Activated CD8-positive, alpha-beta memory T cell treated with anti-CD3 and anti-CD28 coated beads, Interleukin-2, amount 10 ng/mL, durations not matched to agents 7 days and 5 days (primary cell): ENCODE measurements at regions of chr10 and their contacts with region 1.

Region 1: DNA sequence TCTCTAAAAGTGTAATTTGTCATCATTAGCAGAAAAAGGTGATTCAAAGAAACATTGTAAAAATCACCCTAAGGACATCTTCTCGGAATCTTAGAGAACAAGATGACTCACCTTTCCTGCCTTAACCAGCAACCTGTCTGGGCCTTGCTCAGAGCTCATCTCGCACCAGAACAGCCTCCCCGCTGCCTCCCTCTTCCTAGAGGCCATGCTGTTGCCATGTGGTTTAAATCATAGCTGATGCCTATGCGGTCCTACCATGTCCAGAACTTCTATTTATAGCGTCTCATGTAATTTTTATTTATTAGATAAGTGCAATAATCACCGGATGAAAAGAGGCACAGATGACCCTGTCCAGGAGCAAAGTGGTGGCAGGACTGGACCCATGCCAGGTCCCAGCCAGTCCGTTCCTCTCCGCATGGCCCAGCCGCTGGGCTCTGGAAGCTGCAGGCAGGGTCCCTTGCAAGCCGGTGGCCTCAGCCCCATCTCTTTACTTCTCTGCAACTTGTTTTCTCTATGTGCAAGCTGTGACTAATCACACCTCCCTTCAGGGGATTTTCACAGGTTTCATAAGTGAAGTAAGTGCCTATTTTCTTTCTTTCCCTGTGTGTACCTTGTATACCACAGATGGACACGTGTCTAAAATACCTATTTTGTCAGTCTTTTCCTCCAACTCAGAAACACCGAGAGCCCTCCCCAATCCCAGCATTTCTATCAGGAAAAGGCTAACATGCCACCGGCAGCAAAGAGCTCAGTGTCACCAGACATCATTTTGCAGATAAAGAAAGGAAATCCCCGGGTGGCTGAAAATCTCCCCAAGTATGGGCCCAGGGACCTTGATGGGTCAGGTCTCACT is 27.1 kb downstream of the KLF6 start:
- DNase-seq: peak; percentile 89
- ATAC-seq: peak; percentile 92
- H3K4me3 Mint-ChIP-seq: peak overlapping the region; percentile 35
- H3K27ac Mint-ChIP-seq: peak overlapping the region; percentile 99
- H3K4me1 Mint-ChIP-seq: peaks cover 77% of the 10 kb centered on the region
- H3K27me3 Mint-ChIP-seq: no peaks in the 10 kb centered on the region

Region 2: GRCh38 chr10:3740157-3740871 is 17.6 kb before region 1 on chr10:
- CTCF ChIA-PET with region 1: interaction called, 23 read pairs
- DNase-seq: no peak
- ATAC-seq: peak; percentile 85
- H3K4me3 Mint-ChIP-seq: peak overlapping the region; percentile 22
- H3K27ac Mint-ChIP-seq: peak overlapping the region; percentile 88
- H3K4me1 Mint-ChIP-seq: peaks cover 41% of the 10 kb centered on the region
- H3K27me3 Mint-ChIP-seq: peaks cover 2% of the 10 kb centered on the region

Region 3: DNA sequence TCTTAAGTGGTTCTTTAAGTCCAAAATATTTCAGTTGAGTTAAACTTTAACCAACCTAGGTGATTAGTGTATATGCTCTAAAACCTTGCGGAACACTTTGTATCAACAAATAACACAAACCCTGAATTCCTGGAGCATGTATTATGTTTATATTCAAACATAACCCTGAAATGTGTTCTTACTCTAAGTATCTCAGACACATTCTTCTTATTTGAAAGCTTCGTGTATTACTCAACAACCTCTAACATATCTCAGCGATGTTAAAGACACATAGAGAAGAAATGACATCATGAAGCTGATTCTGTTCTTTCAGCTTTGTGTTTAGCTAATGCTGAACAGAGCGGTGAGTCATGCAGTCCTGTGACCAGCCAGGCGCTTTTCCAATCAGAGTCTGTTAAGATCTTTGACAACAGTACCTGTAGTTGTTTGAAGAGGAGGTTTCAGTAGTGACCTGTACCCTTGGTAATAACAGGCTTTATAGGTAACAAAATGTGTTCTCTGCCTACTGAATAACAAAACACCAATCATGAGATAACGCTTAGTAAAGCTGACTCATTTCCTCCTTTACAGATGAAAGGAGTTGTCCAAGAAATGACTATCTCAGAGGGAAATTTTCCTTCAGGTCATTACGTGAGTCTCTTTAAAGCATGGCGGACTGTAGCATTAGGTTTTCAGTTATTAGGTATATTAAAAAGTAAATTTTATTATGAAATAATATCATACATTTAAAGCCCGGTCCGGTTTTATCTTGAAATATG is 94.5 kb after region 1 on chr10:
- CTCF ChIA-PET with region 1: no interaction called
- DNase-seq: peak; percentile 81
- ATAC-seq: peak; percentile 97
- H3K4me3 Mint-ChIP-seq: peak overlapping the region; percentile 18
- H3K27ac Mint-ChIP-seq: peak overlapping the region; percentile 81
- H3K4me1 Mint-ChIP-seq: peaks cover 30% of the 10 kb centered on the region
- H3K27me3 Mint-ChIP-seq: no peaks in the 10 kb centered on the region

Region 4: DNA sequence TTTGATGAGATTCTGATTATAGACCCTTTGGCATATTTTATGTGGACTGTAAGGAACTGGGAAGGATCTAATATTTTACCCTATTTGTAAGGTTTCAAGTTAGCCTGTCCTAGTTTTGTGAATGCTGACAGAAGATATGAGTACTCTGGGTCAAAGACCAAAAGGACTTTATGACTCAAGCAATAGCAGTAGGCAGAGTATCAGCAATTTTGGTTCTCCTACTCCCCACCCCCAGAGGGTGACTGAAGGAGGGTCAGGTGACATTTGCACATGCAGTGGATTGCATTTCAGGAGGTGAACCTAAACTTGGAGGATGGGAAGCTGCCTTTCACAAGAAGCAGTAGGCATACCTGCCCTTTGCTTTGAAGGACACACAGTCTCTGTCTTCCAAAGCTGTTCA is 111.2 kb after region 1 on chr10:
- CTCF ChIA-PET with region 1: no interaction called
- DNase-seq: no peak
- ATAC-seq: no peak
- H3K4me3 Mint-ChIP-seq: no peak overlapping the region
- H3K27ac Mint-ChIP-seq: no peak overlapping the region
- H3K4me1 Mint-ChIP-seq: peaks cover 50% of the 10 kb centered on the region
- H3K27me3 Mint-ChIP-seq: no peaks in the 10 kb centered on the region